Calu3 (cell line): ENCODE measurements at regions of chr17 and their contacts with region 1.

Region 1: GRCh38 chr17:72126563-72127486 is 6.0 kb downstream of the SOX9 start:
- DNase-seq: peak; percentile 61
- H3K4me3 Mint-ChIP-seq: peak overlapping the region; percentile 90
- H3K27ac Mint-ChIP-seq: peak overlapping the region; percentile 64
- H3K4me1 Mint-ChIP-seq: peaks cover 35% of the 10 kb centered on the region
- H3K27me3 Mint-ChIP-seq: peaks cover 28% of the 10 kb centered on the region
- CTCF ChIP-seq: no peak

Region 2: GRCh38 chr17:72338847-72339790 is 212.3 kb after region 1 on chr17:
- CTCF ChIA-PET with region 1: no interaction called
- intact Hi-C with region 1: loop called (anchors 2 kb)
- DNase-seq: peak; percentile 79
- H3K4me3 Mint-ChIP-seq: peak overlapping the region; percentile 12
- H3K27ac Mint-ChIP-seq: peak overlapping the region; percentile 78
- H3K4me1 Mint-ChIP-seq: peaks cover 40% of the 10 kb centered on the region
- H3K27me3 Mint-ChIP-seq: peaks cover 1% of the 10 kb centered on the region
- CTCF ChIP-seq: no peak

Region 3: DNA sequence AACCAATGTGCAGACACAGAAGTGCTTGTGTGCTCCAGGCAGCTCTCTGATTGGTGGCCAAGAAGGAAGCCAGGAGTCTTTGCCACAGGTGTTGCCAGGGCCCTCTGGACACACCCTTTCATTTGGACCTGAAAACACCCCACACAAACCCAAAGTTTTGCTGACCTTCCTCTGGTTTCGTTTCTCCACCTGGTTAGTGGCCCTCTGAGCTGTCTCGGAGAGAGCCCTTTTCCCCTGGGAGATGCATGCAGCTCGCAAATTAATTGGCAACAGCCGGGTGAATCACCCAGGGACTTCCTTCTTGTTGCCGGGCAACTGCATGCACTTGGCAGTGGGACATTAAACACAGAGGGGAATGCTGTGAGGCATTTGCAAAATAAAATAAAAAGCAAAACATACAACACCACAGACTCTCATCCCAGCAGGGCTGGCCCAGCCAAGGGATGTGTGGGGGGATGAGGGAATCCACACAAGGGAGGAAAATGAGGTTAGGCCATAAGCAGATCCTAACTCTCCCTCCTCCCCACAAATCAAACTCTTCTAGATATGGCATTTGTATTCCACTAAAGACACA is 280.6 kb after region 1 on chr17:
- CTCF ChIA-PET with region 1: interaction called, 6 read pairs
- intact Hi-C with region 1: loop called (anchors 5 kb)
- DNase-seq: peak; percentile 90
- H3K4me3 Mint-ChIP-seq: peak overlapping the region; percentile 65
- H3K27ac Mint-ChIP-seq: peak overlapping the region; percentile 99
- H3K4me1 Mint-ChIP-seq: peaks cover 92% of the 10 kb centered on the region
- H3K27me3 Mint-ChIP-seq: no peaks in the 10 kb centered on the region
- CTCF ChIP-seq: no peak

Region 4: DNA sequence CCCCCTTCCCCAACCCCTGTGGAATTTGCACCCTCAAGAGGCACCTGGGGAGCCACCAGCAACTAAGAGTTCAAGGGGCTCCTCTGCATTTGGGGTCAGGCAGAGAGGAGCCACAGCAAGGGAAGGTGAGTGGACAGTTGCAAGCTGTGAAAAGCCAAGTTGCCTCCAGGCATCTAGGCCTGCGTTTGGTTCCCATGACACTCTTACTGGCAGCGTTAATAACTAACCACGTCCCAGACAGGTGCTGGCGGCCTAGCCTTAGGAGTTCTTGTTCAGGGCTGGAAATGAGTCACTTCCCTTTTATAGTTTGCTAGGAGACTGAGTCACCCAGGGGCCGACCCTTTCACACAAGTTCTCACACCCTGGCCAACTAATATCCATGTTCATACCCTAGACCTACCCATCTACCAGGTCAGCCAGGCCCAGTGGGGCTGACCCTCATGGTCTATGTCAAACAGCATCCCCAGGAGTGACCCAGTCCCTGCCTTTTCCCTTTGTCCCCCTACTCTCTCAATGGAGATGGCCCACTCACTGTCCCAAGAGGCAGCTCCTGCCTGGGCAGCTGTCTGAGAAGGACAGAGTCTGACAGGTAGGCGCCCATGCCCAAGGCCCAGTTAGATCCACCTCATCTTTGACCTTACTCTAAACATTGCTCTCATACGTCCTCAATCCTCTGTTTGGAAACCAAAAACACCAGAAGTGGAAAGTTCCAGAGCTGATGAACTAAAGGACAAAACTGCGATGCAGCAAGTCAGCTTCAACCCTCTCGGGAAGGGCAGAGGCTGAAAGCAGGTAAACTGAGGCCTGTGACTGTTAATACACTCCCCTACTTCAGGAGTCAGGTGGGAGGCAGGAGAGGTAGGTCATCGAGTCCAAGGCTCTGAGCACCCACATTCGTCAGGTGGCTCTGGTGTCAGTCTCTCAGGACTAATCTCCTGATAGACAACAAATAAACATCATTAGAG is 294.6 kb after region 1 on chr17:
- CTCF ChIA-PET with region 1: no interaction called
- intact Hi-C with region 1: loop called (anchors 5 kb)
- DNase-seq: peak; percentile 90
- H3K4me3 Mint-ChIP-seq: peak overlapping the region; percentile 51
- H3K27ac Mint-ChIP-seq: peak overlapping the region; percentile 96
- H3K4me1 Mint-ChIP-seq: peaks cover 61% of the 10 kb centered on the region
- H3K27me3 Mint-ChIP-seq: no peaks in the 10 kb centered on the region
- CTCF ChIP-seq: no peak

Region 5: GRCh38 chr17:72465191-72466024 is 338.6 kb after region 1 on chr17:
- CTCF ChIA-PET with region 1: no interaction called
- intact Hi-C with region 1: loop called (anchors 5 kb)
- DNase-seq: peak; percentile 86
- H3K4me3 Mint-ChIP-seq: peak overlapping the region; percentile 58
- H3K27ac Mint-ChIP-seq: no peak overlapping the region
- H3K4me1 Mint-ChIP-seq: peaks cover 61% of the 10 kb centered on the region
- H3K27me3 Mint-ChIP-seq: no peaks in the 10 kb centered on the region
- CTCF ChIP-seq: no peak